GM23248 (cell line): ENCODE measurements at regions of chr6 and their contacts with region 1.

Region 1: DNA sequence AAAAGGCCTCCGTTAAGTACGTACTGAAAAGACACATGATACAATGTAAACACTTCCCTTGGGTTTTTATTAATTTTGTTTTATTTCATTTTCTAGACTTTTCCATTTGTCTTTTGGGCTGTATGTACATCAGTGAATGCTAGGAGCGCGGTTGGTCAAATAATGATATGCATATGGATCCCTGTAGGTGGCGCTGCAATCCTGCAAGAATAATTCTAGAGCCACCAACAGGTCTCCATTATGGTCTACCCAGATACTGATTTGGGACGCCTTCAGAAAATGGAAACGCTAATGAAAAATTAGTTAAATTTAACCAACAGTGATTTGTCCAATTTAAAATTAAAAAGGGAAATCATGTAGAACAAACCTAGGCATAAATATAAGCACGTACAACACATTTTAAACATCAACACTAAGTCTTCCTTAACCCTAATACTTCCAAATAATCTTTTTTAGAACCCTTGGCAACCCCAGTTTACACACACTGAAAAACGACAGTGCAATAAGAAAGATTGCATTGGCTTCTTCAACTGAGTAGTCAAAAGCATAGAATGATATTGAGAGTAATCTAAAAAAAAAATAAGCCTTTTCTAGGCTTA is 433.5 kb downstream of the RFPL4B start:
- DNase-seq: peak; percentile 84
- H3K4me3 ChIP-seq: no peak overlapping the region
- H3K27ac ChIP-seq: no peak overlapping the region
- H3K4me1 ChIP-seq: 0 out of 2 replicates have a peak, but pooled peaks cover 5% of the 10 kb centered on the region
- H3K27me3 ChIP-seq: no peaks in the 10 kb centered on the region

Region 2: DNA sequence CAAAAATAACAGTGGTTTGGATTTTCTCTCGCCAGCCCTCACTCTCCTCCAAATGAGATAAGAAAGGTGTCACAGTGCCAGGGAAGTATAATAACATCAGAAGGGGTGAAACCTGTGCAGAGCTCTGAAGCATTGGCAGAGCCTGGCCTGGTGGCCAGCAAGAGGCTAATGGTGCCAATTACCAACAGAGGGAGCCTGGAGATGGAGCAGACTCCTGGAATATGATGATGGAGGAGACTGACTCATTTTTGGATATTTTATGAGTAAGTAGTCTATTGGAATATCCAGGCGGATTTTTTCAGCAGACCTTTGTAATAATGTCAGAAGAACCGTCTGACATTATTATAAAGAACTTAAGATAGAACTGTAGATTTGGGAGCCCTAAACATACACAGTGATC is 633.9 kb after region 1 on chr6:
- in situ Hi-C with region 1: loop called (anchors 25 kb)
- DNase-seq: peak; percentile 91
- H3K4me3 ChIP-seq: no peak overlapping the region
- H3K27ac ChIP-seq: peak overlapping the region; percentile 72
- H3K4me1 ChIP-seq: peaks cover 49% of the 10 kb centered on the region
- H3K27me3 ChIP-seq: no peaks in the 10 kb centered on the region